Stomach (tissue), 19 donors: ENCODE measurements at regions of chr16 and their contacts with region 1.

Region 1: DNA sequence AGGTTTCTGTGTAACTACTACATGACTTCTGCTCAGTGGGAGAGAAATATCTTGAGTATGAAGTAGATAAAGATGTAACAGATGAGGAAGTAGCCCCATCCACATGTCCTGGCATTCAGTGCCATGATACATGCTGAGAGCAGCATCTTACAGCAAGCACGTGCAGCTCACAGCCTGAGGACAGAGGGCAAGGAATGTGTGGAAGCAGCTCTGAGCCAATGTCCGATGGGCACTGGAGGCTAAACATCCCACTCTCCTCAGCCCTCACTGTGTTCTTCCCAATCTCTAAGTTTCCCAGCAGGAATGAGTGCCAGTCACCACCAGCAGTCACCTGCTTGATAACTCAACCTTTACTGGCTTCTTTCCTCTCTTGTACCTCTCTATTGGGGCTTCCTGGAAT is 40.4 kb downstream of the CFDP1 start:
- DNase-seq: no peak
- H3K4me3 ChIP-seq: no peak overlapping the region
- H3K27ac ChIP-seq: no peak overlapping the region
- H3K4me1 ChIP-seq: peaks cover 0 to 21% (median 6%) of the 10 kb centered on the region in 4 donors
- H3K27me3 ChIP-seq: no peaks in the 10 kb centered on the region
- CTCF ChIP-seq: no peak
- EP300 ChIP-seq: no peak
- POLR2A ChIP-seq: no peak

Region 2: GRCh38 chr16:75206749-75207451 is 186.0 kb before region 1 on chr16 and contains the start of gene CTRB2:
- intact Hi-C with region 1: loop called (anchors 10 kb)
- DNase-seq: no peak
- H3K4me3 ChIP-seq: no peak within 1 kb of the TSS
- H3K27ac ChIP-seq: no peak within 1 kb of the TSS
- H3K4me1 ChIP-seq: no peaks in the 10 kb centered on the region
- H3K27me3 ChIP-seq: peaks cover 0 to 9% (median 0%) of the 10 kb centered on the region in 3 donors
- CTCF ChIP-seq: no peak
- EP300 ChIP-seq: no peak
- POLR2A ChIP-seq: no peak
- total RNA-seq, gene CTRB2: not detected

Region 3: GRCh38 chr16:75238132-75238852 is 154.6 kb before region 1 on chr16:
- intact Hi-C with region 1: loop called (anchors 10 kb)
- DNase-seq: peak; percentile 77 to 90
- H3K4me3 ChIP-seq: peak overlapping the region in 1 of 4 donors; percentile 24
- H3K27ac ChIP-seq: peak overlapping the region; percentile 72 to 86 (median 74)
- H3K4me1 ChIP-seq: peaks cover 41 to 84% (median 71%) of the 10 kb centered on the region in 4 donors
- H3K27me3 ChIP-seq: no peaks in the 10 kb centered on the region
- CTCF ChIP-seq: no peak
- EP300 ChIP-seq: no peak
- POLR2A ChIP-seq: no peak

Region 4: DNA sequence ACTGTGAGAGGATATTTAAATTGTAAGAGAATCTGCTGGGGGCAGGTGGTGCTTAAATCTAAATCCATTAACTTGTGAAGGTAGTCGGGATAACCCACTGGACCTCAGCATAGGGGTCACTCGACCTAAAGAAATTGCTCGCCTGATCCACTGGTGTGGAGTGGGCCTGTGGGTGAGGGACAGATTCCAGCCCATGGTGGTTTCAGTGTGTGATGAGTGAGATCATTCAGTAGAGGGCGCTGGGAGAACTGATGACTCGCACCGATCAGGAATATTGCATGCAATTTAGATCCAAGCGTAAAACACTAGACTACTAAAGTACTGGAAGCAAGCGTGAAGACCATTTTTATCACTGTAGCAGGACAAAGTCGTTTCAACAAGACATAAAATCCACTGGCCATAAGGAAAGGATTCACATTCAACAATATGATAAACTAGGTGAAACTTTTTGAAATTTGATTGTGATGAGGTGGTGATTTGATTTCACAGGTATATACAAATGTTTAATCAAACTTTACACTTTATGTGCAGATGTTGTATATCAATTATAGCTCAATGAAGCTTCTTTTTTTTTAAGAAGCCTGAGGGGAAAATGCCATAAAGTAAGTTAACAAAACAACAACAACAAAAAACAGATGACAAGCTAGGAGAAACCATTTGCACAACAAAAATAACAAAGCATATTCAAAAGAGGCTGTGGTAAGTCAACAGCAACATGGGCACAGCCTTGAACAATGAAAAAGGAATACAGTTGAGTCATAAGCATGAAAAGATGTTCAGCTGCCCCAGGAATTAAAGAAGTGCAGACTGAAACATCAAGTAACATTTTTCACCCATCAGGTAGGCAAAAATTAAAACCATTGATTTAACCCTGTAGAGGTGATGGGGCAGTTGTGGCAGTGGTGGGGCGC is 79.1 kb after region 1 on chr16:
- intact Hi-C with region 1: no loop called
- DNase-seq: peak; percentile 59 to 85
- H3K4me3 ChIP-seq: no peak overlapping the region
- H3K27ac ChIP-seq: no peak overlapping the region
- H3K4me1 ChIP-seq: no peaks in the 10 kb centered on the region
- H3K27me3 ChIP-seq: no peaks in the 10 kb centered on the region
- CTCF ChIP-seq: peak in 5 of 7 experiments; percentile 61 to 76 (median 68)
- EP300 ChIP-seq: no peak
- POLR2A ChIP-seq: no peak

Region 5: DNA sequence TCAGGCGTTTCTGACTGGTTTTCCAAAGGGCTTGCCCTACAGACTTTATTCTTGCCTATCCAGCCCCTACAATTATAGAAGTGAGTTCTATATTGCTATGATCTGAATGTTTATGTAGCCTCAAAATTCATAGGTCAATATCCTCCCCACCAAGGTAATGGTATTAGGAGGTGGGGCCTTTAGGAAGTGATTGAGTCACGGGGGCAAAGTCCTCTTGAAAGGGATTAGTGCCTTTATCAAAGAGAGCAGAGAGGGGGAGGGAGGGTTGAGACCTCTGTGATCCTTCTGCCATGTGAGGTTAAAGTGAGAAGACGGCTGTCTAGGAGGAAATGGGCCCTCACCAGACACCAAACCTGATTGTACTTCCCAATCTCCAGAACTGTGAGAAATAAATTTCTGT is 334.3 kb after region 1 on chr16:
- intact Hi-C with region 1: no loop called
- DNase-seq: peak in 1 of 2 donors; percentile 47
- H3K4me3 ChIP-seq: no peak overlapping the region
- H3K27ac ChIP-seq: no peak overlapping the region
- H3K4me1 ChIP-seq: no peaks in the 10 kb centered on the region
- H3K27me3 ChIP-seq: no peaks in the 10 kb centered on the region
- CTCF ChIP-seq: no peak
- EP300 ChIP-seq: no peak
- POLR2A ChIP-seq: no peak